OCI-LY7 (cell line): ENCODE measurements at regions of chr11 and their contacts with region 1.

Region 1: DNA sequence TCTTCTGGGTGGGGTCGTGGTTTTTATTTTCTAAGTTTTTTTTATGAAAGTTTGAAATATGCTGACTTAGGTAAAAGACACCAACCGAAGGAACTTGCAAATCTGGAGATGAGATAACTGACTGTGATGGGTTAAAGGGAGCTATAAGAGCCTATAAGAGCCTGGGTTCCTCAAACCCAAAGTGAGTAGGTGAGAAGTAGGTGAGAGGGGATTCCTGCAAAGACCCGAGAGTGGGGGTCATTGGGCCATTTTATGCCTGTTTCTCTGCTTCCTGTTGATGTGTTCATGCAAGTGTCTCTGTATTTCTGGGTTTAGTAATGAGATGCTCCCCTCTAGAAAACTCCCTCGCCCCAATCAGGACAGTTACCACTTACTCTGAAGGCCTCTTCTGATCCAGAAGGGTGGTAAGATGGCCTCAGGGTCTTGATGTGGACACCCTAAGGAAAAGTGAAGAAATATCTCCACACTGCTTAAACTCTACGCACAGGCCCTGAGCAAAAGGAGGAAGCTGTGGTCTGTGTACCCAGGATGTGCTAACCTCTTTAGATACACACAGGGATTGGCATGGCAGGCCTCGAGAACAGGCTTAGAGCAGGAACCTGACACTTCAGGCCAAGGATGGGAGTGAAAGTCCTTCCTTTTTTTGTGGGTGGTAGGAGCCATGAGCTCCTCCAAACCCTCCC is 1.8 kb downstream of the FLI1 start:
- DNase-seq: peak; percentile 78
- H3K4me3 ChIP-seq: peak overlapping the region; percentile 79
- H3K27ac ChIP-seq: peak overlapping the region; percentile 66
- H3K4me1 ChIP-seq: peaks cover 50% of the 10 kb centered on the region
- CTCF ChIP-seq: no peak

Region 2: DNA sequence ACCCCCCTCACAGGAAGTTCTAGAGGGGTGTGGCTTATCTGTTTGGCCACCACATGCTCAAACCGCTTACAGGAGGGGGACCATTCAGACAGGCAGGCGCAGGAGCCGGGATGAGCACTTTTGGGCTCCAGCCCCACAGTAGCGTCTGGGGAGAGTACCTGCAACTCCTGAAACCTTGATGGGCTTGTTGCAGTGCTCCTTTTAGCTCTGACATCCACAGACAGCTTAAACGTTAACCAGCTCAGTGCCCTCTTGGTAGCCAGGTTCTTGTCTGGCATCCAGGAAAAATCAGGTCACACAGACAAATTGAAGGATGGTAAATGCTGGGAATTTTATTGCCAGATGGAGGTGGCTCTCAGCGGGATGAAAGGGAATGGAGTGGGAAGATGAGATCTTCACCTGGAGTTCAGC is 434.7 kb before region 1 on chr11:
- CTCF ChIA-PET with region 1: no interaction called
- POLR2A ChIA-PET with region 1: no interaction called
- intact Hi-C with region 1: no loop called
- DNase-seq: no peak
- H3K4me3 ChIP-seq: no peak overlapping the region
- H3K27ac ChIP-seq: no peak overlapping the region
- H3K4me1 ChIP-seq: peaks cover 10% of the 10 kb centered on the region
- CTCF ChIP-seq: no peak

Region 3: DNA sequence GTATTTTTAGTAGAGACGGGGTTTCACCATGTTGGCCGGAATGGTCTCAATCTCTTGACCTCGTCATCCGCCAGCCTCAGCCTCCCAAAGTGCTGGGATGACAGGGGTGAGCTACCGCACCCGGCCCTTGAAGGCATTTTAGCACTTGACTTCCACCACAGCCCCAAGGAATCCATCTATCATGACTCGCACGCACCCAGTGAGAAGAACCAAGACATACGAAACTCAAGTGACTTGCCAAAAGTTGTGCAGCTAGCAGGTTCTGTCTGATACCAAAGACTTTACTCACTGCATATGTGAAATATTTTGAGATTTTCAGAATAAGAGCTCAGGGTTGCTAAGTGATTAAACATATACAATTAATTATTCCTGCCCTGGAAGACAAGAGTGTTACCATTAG is 19.2 kb after region 1 on chr11:
- CTCF ChIA-PET with region 1: interaction called, 5 read pairs
- POLR2A ChIA-PET with region 1: interaction called, 10 read pairs
- intact Hi-C with region 1: loop called (anchors 1 kb)
- DNase-seq: no peak
- H3K4me3 ChIP-seq: no peak overlapping the region
- H3K27ac ChIP-seq: no peak overlapping the region
- H3K4me1 ChIP-seq: peaks cover 71% of the 10 kb centered on the region
- CTCF ChIP-seq: no peak

Region 4: DNA sequence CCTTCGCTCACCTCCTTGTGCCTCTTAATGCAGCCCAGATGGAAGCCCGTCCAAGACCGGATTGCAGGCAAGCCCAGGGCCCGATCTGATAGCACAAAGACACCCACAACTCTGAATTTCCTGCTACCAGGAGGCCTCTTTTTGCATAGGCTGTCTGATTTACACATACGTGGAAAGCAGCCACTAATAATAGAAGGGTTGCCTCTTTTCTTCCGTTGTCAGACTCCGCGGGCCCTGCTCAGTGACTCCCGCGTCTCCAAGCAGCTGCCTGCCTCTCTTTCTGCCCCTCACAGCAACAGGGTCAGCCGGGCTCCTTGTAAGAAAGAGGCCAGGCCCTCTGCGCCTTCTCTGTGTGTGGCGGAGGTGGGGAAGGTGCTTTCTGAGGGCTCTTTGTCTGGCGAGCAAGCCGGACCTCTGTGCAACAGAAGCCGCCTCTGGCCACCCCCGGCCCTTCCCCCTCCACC is 24.9 kb after region 1 on chr11:
- CTCF ChIA-PET with region 1: interaction called, 8 read pairs
- POLR2A ChIA-PET with region 1: interaction called, 12 read pairs
- intact Hi-C with region 1: loop called (anchors 1 kb)
- DNase-seq: peak; percentile 90
- H3K4me3 ChIP-seq: peak overlapping the region; percentile 70
- H3K27ac ChIP-seq: peak overlapping the region; percentile 99
- H3K4me1 ChIP-seq: peaks cover 93% of the 10 kb centered on the region
- CTCF ChIP-seq: no peak

Region 5: DNA sequence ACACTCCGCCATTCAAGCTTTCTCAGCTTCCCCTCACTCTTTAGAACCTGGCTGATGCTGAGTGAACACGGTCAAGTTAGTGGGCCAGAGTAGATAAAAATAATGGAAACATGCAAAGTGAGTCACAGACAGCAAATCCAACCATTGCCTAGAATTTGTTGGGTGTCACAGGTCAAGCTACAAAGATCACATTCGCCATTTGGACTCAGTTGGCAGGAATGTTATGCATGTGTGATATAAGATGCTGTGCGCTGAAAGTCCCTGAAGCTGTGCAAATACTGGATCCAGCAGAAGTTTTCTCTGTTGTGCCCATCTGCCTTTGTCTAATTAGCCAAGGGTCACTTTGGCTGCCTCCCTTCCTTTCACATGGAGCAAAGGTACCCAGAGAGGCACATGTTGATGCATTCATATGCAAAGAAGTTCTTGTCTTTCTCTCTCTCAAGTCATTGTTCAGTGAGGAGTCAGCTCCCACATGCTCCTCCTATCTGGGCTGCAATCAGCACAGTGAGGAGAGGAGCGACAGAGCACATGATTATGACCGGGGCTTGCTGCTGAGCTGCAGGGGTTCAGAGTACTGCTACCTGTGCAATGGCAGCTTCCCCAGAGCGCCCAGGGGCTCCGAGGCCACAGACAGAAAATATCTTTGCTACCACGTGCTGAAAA is 37.9 kb after region 1 on chr11:
- CTCF ChIA-PET with region 1: interaction called, 7 read pairs
- POLR2A ChIA-PET with region 1: interaction called, 15 read pairs
- intact Hi-C with region 1: loop called (anchors 1 kb)
- DNase-seq: peak; percentile 83
- H3K4me3 ChIP-seq: peak overlapping the region; percentile 50
- H3K27ac ChIP-seq: peak overlapping the region; percentile 99
- H3K4me1 ChIP-seq: peaks cover 100% of the 10 kb centered on the region
- CTCF ChIP-seq: no peak

Region 6: DNA sequence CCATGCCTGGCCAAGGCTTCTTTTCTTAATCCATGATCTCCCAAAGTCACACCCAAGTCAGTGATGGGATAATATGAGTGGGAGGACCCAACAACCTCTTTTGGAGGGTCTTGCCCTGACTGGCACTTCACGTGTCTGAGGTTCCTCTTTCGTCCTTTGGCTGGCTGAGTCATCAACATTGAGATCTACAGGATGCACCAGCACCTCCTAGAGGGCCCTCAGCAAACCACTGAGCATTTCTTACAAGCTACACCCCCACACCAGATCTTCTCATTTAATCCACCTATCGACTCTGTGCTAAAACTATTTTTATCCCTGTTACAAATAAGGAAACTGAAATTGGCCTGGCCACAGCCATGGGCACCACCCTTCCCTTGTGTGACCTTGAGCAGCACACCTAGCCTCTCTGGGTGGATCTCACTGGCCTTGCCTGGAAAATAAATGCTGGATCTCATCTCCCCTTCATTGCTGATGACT is 61.6 kb after region 1 on chr11:
- CTCF ChIA-PET with region 1: no interaction called
- POLR2A ChIA-PET with region 1: interaction called, 5 read pairs
- intact Hi-C with region 1: loop called (anchors 1 kb)
- DNase-seq: peak; percentile 88
- H3K4me3 ChIP-seq: no peak overlapping the region
- H3K27ac ChIP-seq: peak overlapping the region; percentile 9
- H3K4me1 ChIP-seq: peaks cover 53% of the 10 kb centered on the region
- CTCF ChIP-seq: peak; percentile 93

Region 7: DNA sequence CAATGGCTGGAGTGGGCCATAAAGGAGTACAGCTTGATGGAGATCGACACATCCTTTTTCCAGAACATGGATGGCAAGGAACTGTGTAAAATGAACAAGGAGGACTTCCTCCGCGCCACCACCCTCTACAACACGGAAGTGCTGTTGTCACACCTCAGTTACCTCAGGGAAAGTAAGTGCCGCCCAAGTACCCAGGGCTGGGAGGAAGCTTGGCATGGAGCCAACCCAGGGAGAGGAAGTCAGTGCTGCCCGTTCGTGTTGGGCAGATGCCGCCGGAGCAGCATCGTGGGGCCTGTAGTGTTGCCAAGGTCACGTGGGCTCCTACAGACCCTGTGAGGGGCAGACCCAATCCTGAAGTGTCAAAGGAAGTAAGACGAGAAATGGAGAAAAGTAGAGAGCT is 77.1 kb after region 1 on chr11:
- CTCF ChIA-PET with region 1: no interaction called
- POLR2A ChIA-PET with region 1: no interaction called
- intact Hi-C with region 1: no loop called
- DNase-seq: peak; percentile 71
- H3K4me3 ChIP-seq: no peak overlapping the region
- H3K27ac ChIP-seq: no peak overlapping the region
- H3K4me1 ChIP-seq: peaks cover 21% of the 10 kb centered on the region
- CTCF ChIP-seq: no peak